Endothelial cell of umbilical vein (primary cell): ENCODE measurements at regions of chr2 and their contacts with region 1.

Region 1: GRCh38 chr2:170235860-170236679 is 58.1 kb downstream of the MYO3B start:
- DNase-seq: peak; percentile 72
- H3K4me3 ChIP-seq: no peak overlapping the region
- H3K27ac ChIP-seq: no peak overlapping the region
- H3K4me1 ChIP-seq: no peaks in the 10 kb centered on the region
- H3K27me3 ChIP-seq: peaks cover 11 to 27% of the 10 kb centered on the region in 2 experiments
- CTCF ChIP-seq: peak; percentile 38 to 45
- POLR2A ChIP-seq: no peak

Region 2: GRCh38 chr2:170191166-170191866 is 44.8 kb before region 1 on chr2:
- CTCF ChIA-PET with region 1: no interaction called
- POLR2A ChIA-PET with region 1: no interaction called
- dilution Hi-C with region 1: no loop called
- intact Hi-C with region 1: no loop called
- DNase-seq: no peak
- H3K4me3 ChIP-seq: no peak overlapping the region
- H3K27ac ChIP-seq: no peak overlapping the region
- H3K4me1 ChIP-seq: no peaks in the 10 kb centered on the region
- H3K27me3 ChIP-seq: peaks cover 0 to 6% of the 10 kb centered on the region in 2 experiments
- CTCF ChIP-seq: no peak
- POLR2A ChIP-seq: no peak

Region 3: GRCh38 chr2:170221317-170222288 is 14.5 kb before region 1 on chr2:
- CTCF ChIA-PET with region 1: interaction called, 17 read pairs
- POLR2A ChIA-PET with region 1: interaction called, 3 read pairs
- dilution Hi-C with region 1: no loop called
- intact Hi-C with region 1: no loop called
- DNase-seq: peak; percentile 83
- H3K4me3 ChIP-seq: no peak overlapping the region
- H3K27ac ChIP-seq: peak overlapping the region; percentile 56
- H3K4me1 ChIP-seq: peaks cover 13% of the 10 kb centered on the region
- H3K27me3 ChIP-seq: no peaks in the 10 kb centered on the region
- CTCF ChIP-seq: no peak
- POLR2A ChIP-seq: no peak

Region 4: GRCh38 chr2:170247882-170248393 is 11.9 kb after region 1 on chr2:
- CTCF ChIA-PET with region 1: interaction called, 13 read pairs
- POLR2A ChIA-PET with region 1: no interaction called
- dilution Hi-C with region 1: no loop called
- intact Hi-C with region 1: no loop called
- DNase-seq: peak; percentile 10
- H3K4me3 ChIP-seq: no peak overlapping the region
- H3K27ac ChIP-seq: no peak overlapping the region
- H3K4me1 ChIP-seq: no peaks in the 10 kb centered on the region
- H3K27me3 ChIP-seq: peaks cover 13 to 17% of the 10 kb centered on the region in 2 experiments
- CTCF ChIP-seq: no peak
- POLR2A ChIP-seq: no peak

Region 5: GRCh38 chr2:170307967-170308366 is 71.9 kb after region 1 on chr2:
- CTCF ChIA-PET with region 1: no interaction called
- POLR2A ChIA-PET with region 1: no interaction called
- dilution Hi-C with region 1: no loop called
- intact Hi-C with region 1: loop called (anchors 5 kb)
- DNase-seq: peak; percentile 6
- H3K4me3 ChIP-seq: no peak overlapping the region
- H3K27ac ChIP-seq: no peak overlapping the region
- H3K4me1 ChIP-seq: no peaks in the 10 kb centered on the region
- H3K27me3 ChIP-seq: peaks cover 18 to 26% of the 10 kb centered on the region in 2 experiments
- CTCF ChIP-seq: no peak
- POLR2A ChIP-seq: no peak

Region 6: GRCh38 chr2:170361090-170361936 is 125.2 kb after region 1 on chr2:
- CTCF ChIA-PET with region 1: interaction called, 32 read pairs
- POLR2A ChIA-PET with region 1: no interaction called
- dilution Hi-C with region 1: no loop called
- intact Hi-C with region 1: loop called (anchors 1 kb)
- DNase-seq: peak; percentile 75
- H3K4me3 ChIP-seq: no peak overlapping the region
- H3K27ac ChIP-seq: no peak overlapping the region
- H3K4me1 ChIP-seq: no peaks in the 10 kb centered on the region
- H3K27me3 ChIP-seq: peaks cover 41 to 63% of the 10 kb centered on the region in 2 experiments
- CTCF ChIP-seq: peak; percentile 71 to 72
- POLR2A ChIP-seq: no peak